Activated CD4-positive, alpha-beta memory T cell treated with anti-CD3 and anti-CD28 coated beads for 36 hours (primary cell): ENCODE measurements at regions of chr11 and their contacts with region 1.

Region 1: DNA sequence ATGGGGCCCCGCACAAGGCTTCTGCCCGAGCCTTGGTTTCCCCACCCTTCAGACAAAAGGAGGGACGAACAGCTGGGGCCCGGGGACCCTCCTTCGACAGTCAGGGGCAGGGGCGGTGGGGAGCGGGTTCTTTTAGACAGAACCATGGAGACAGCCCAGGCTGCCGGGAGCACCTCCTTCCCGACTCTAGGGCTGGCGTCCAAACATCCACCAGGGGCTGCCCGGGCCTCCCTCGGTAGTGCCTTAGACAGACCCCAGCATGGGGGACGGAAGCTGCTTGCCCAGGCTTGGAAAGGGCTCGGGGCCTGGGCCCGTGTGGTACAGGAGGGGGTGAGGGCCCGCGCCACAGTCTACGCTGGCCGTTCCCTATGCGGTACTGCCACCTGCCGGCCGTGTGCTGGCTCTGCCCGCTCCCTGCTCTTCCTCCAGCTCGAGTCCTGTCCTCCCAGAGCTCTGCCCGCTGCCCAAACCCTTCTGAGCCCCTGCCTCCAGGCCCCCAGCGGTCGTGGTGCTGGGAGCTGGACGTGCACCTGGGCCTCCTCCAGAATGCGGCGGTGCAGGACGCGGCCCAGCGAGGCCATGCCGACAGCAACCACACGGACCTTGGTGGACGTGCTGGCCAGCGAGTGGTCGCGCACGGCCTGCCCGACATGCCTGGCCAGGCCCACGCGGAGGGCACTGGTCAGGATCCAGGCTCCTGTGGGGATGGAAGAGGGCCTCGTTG is 20.1 kb downstream of the TSSC4 start:
- DNase-seq: peak; percentile 79
- H3K4me3 Mint-ChIP-seq: no peak overlapping the region
- H3K27ac Mint-ChIP-seq: no peak overlapping the region
- H3K4me1 Mint-ChIP-seq: peaks cover 2% of the 10 kb centered on the region
- H3K27me3 Mint-ChIP-seq: no peaks in the 10 kb centered on the region

Region 2: GRCh38 chr11:2186669-2187279 is 233.9 kb before region 1 on chr11:
- CTCF ChIA-PET with region 1: interaction called, 46 read pairs
- POLR2A ChIA-PET with region 1: no interaction called
- intact Hi-C with region 1: loop called (anchors 2 kb)
- DNase-seq: peak; percentile 56
- H3K4me3 Mint-ChIP-seq: no peak overlapping the region
- H3K27ac Mint-ChIP-seq: no peak overlapping the region
- H3K4me1 Mint-ChIP-seq: no peaks in the 10 kb centered on the region
- H3K27me3 Mint-ChIP-seq: peaks cover 14% of the 10 kb centered on the region

Region 3: GRCh38 chr11:2202055-2202899 is 218.4 kb before region 1 on chr11:
- CTCF ChIA-PET with region 1: interaction called, 18 read pairs
- POLR2A ChIA-PET with region 1: no interaction called
- intact Hi-C with region 1: loop called (anchors 1 kb)
- DNase-seq: no peak
- H3K4me3 Mint-ChIP-seq: no peak overlapping the region
- H3K27ac Mint-ChIP-seq: no peak overlapping the region
- H3K4me1 Mint-ChIP-seq: no peaks in the 10 kb centered on the region
- H3K27me3 Mint-ChIP-seq: no peaks in the 10 kb centered on the region

Region 4: GRCh38 chr11:2312232-2313042 is 108.2 kb before region 1 on chr11:
- CTCF ChIA-PET with region 1: interaction called, 340 read pairs
- POLR2A ChIA-PET with region 1: no interaction called
- intact Hi-C with region 1: no loop called
- DNase-seq: no peak
- H3K4me3 Mint-ChIP-seq: no peak overlapping the region
- H3K27ac Mint-ChIP-seq: no peak overlapping the region
- H3K4me1 Mint-ChIP-seq: no peaks in the 10 kb centered on the region
- H3K27me3 Mint-ChIP-seq: no peaks in the 10 kb centered on the region

Region 5: DNA sequence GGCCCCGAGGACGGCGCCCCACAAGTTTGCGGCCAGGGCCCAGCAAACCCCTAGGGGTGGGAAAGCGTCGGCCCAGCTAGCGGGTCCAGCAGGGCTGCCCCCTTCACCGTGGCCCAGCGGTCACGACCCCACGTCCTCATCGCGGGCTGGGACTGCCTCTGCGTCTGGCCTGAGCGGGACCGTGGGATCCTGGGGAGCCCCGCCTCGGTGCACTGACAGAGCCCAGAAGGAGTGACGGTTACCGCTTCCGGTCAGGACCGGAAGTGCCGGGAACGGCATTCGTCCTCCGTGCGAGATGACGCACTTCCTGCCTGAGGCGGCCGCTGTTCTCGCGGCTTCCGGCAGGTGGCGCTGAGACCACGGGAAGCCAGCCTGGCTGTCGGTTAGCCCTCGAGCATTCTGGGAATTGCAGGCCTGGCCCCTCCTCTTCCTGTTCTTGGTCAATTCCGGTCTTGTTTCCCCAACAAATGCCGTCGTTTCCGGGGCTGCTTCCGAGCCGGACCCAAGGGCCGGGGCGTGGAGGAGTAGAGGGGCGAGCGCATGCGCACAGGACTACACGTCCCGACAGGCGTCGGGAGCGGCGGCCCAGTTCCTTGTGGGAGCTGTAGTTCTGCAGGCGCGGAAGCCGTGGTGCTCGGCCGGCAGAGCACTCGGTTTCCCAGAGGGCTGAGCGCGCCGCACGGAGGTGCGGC is 20.4 kb before region 1 on chr11 and contains the start of gene TSSC4:
- CTCF ChIA-PET with region 1: interaction called, 26 read pairs
- POLR2A ChIA-PET with region 1: no interaction called
- intact Hi-C with region 1: loop called (anchors 2 kb)
- DNase-seq: peak; percentile 99
- H3K4me3 Mint-ChIP-seq: peak within 1 kb of the TSS; percentile 84
- H3K27ac Mint-ChIP-seq: peak within 1 kb of the TSS; percentile 82
- H3K4me1 Mint-ChIP-seq: peaks cover 15% of the 10 kb centered on the region
- H3K27me3 Mint-ChIP-seq: no peaks in the 10 kb centered on the region
- total RNA-seq, gene TSSC4: 33.8 to 40.2 TPM

Region 6: DNA sequence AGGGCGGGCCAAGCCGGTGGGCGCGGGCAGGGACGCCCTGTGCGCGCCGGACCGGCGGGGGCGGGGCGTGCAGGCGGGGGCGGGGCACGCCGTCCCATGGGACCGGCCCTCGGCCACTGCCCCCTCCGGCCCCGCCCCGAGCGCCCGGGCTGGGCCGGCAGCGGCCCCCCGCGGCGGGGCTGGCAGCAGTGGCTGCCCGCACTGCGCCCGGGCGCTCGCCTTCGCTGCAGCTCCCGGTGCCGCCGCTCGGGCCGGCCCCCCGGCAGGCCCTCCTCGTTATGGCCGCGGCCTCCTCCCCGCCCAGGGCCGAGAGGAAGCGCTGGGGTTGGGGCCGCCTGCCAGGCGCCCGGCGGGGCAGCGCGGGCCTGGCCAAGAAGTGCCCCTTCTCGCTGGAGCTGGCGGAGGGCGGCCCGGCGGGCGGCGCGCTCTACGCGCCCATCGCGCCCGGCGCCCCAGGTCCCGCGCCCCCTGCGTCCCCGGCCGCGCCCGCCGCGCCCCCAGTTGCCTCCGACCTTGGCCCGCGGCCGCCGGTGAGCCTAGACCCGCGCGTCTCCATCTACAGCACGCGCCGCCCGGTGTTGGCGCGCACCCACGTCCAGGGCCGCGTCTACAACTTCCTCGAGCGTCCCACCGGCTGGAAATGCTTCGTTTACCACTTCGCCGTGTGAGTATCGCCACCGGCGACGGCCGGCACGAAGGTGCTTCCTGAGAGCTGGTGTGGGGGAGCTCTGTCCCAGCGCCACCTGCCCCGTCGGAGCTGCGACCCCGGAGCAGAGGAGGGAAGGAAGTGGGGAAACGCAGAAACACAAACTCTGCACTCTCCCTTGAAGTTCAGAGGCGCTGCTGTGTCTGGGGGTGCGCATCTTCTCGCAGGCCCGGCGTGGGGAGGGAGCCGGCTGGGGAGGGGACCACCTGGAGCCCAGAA is 24.4 kb after region 1 on chr11 and contains the start of gene KCNQ1:
- CTCF ChIA-PET with region 1: interaction called, 10 read pairs
- POLR2A ChIA-PET with region 1: no interaction called
- intact Hi-C with region 1: no loop called
- DNase-seq: peak; percentile 52
- H3K4me3 Mint-ChIP-seq: peak within 1 kb of the TSS; percentile 89
- H3K27ac Mint-ChIP-seq: peak within 1 kb of the TSS; percentile 4
- H3K4me1 Mint-ChIP-seq: peaks cover 33% of the 10 kb centered on the region
- H3K27me3 Mint-ChIP-seq: no peaks in the 10 kb centered on the region
- total RNA-seq, gene KCNQ1: 10.7 to 10.8 TPM

Region 7: GRCh38 chr11:2641623-2642022 is 221.0 kb after region 1 on chr11:
- CTCF ChIA-PET with region 1: no interaction called
- POLR2A ChIA-PET with region 1: no interaction called
- intact Hi-C with region 1: no loop called
- DNase-seq: no peak
- H3K4me3 Mint-ChIP-seq: no peak overlapping the region
- H3K27ac Mint-ChIP-seq: no peak overlapping the region
- H3K4me1 Mint-ChIP-seq: no peaks in the 10 kb centered on the region
- H3K27me3 Mint-ChIP-seq: no peaks in the 10 kb centered on the region